ENCODE measurements at regions of chr12 and their contacts with region 1.

Region 1: DNA sequence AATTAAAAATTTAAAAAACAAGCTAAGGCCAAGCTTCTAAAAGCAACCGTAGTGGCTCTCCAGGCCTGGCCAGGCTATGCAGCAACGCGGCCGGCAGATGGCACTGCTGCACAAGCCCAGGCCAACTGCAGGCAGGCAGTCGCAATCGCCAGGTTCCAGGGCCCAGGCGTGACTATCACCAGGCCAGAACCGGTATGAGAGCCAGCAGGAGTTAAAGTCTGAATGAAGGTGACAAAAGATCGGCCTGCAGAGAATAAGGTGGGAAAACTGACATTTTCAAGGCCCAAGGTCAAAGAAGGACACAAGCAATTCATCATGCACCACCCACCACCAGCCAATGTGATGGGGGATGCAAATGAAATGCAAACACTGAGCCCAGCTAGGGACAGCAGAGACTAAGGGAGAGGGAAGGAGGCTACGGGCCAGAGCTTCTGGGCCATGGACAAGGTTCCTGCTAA is 43.6 kb upstream of the ANO2 start:
- DNase-seq: peak; percentile 49 to 81 (median 68)
- ATAC-seq: peak; percentile 75
- H3K4me3 ChIP-seq: no peak overlapping the region
- H3K4me3 Mint-ChIP-seq: no peak overlapping the region
- H3K27ac ChIP-seq: no peak overlapping the region
- H3K27ac Mint-ChIP-seq: no peak overlapping the region
- H3K4me1 ChIP-seq: no peaks in the 10 kb centered on the region
- H3K4me1 Mint-ChIP-seq: peaks cover 2% of the 10 kb centered on the region
- H3K27me3 ChIP-seq: no peaks in the 10 kb centered on the region
- H3K27me3 Mint-ChIP-seq: no peaks in the 10 kb centered on the region
- CTCF ChIP-seq: peak; percentile 91

Region 2: GRCh38 chr12:5808981-5809380 is 179.7 kb before region 1 on chr12:
- CTCF ChIA-PET with region 1: no interaction called
- POLR2A ChIA-PET with region 1: no interaction called
- intact Hi-C with region 1: no loop called
- DNase-seq: no peak
- ATAC-seq: no peak
- H3K4me3 ChIP-seq: no peak overlapping the region
- H3K4me3 Mint-ChIP-seq: no peak overlapping the region
- H3K27ac ChIP-seq: no peak overlapping the region
- H3K27ac Mint-ChIP-seq: no peak overlapping the region
- H3K4me1 ChIP-seq: no peaks in the 10 kb centered on the region
- H3K4me1 Mint-ChIP-seq: no peaks in the 10 kb centered on the region
- H3K27me3 ChIP-seq: no peaks in the 10 kb centered on the region
- H3K27me3 Mint-ChIP-seq: peaks cover 14% of the 10 kb centered on the region
- CTCF ChIP-seq: no peak

Region 3: GRCh38 chr12:5973461-5974130 is 15.1 kb before region 1 on chr12:
- CTCF ChIA-PET with region 1: interaction called, 14 read pairs
- POLR2A ChIA-PET with region 1: no interaction called
- intact Hi-C with region 1: no loop called
- DNase-seq: no peak
- ATAC-seq: no peak
- H3K4me3 ChIP-seq: no peak overlapping the region
- H3K4me3 Mint-ChIP-seq: no peak overlapping the region
- H3K27ac ChIP-seq: no peak overlapping the region
- H3K27ac Mint-ChIP-seq: no peak overlapping the region
- H3K4me1 ChIP-seq: no peaks in the 10 kb centered on the region
- H3K4me1 Mint-ChIP-seq: no peaks in the 10 kb centered on the region
- H3K27me3 ChIP-seq: no peaks in the 10 kb centered on the region
- H3K27me3 Mint-ChIP-seq: peaks cover 39% of the 10 kb centered on the region
- CTCF ChIP-seq: no peak

Region 4: DNA sequence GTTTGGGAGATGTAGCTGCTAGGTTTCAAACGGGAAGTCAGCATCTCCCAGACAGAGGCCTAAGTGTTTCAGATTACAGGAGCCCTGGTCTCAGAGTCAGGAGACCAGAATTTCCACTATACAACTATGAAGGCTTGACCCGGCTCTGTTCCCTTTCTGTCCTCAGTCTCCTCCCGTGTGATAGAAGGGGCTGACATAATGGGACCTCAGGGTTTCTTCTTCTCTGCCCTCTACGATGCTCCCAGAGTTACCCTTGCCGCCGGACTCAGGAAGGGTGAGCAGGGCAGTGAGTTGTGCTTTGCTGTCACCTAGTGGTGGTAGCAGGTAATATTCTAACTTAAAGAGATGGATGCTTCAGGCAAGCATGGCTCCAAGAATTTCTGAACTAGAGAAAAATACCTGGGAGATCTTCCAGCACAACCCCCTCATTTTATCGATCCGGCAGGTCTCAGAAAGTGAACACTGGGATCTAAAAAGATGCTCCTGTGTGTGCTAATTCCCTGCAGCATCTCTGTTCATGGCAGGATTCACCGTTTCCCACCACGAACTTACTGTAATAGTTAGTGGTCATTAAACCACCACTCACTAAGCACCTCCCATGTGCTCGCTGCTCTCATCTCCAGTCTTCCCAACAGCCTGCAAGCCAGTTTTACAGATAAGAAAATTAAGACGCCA is 51.3 kb after region 1 on chr12:
- CTCF ChIA-PET with region 1: interaction called, 168 read pairs
- POLR2A ChIA-PET with region 1: no interaction called
- intact Hi-C with region 1: loop called (anchors 1 kb)
- DNase-seq: peak in 8 of 9 experiments; percentile 21 to 74 (median 44)
- ATAC-seq: peak; percentile 72
- H3K4me3 ChIP-seq: no peak overlapping the region
- H3K4me3 Mint-ChIP-seq: no peak overlapping the region
- H3K27ac ChIP-seq: no peak overlapping the region
- H3K27ac Mint-ChIP-seq: no peak overlapping the region
- H3K4me1 ChIP-seq: peaks cover 4% of the 10 kb centered on the region
- H3K4me1 Mint-ChIP-seq: peaks cover 2% of the 10 kb centered on the region
- H3K27me3 ChIP-seq: no peaks in the 10 kb centered on the region
- H3K27me3 Mint-ChIP-seq: no peaks in the 10 kb centered on the region
- CTCF ChIP-seq: peak; percentile 82

Region 5: DNA sequence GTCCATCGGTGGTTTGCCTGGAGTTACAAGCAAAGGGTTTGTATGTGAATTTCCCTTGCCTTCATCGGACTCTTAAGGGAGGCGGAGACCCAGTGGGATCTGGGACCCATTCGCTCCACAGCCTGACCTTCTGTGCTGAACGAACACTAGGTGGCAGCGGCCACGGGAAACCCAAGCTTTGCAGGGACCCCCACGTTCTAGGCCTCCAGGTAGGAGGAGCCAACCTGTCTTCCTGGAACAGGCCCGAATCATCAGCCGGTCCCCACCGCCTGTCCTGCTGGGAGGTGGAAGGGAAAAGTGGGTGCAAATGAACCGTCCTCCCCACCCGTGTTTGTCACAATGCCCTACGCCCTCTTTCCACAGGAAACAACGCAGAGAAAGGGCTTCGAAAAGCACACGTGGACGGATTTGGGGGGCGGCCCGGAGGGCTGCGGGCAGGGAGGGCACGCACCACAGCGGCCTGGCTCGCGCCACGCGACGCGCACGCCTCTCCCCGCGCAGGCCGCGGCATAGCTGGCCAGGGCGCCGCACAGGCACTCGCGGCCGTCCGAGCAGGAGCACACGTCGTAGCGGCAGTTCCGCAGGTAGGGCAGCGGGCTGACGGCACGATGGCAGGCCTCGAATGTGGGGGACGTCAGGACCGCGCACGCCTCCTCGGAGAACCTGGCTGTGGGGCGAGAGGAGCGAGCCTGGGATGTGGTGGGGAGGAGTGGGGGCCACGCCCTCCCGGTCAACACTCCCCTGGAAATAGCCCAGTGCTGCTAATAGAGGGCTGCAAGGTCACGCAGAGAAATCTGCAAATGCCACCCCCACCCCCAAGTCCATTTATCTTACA is 67.9 kb after region 1 on chr12:
- CTCF ChIA-PET with region 1: interaction called, 24 read pairs
- POLR2A ChIA-PET with region 1: no interaction called
- intact Hi-C with region 1: no loop called
- DNase-seq: peak in 8 of 9 experiments; percentile 20 to 78 (median 58)
- ATAC-seq: peak; percentile 94
- H3K4me3 ChIP-seq: peak overlapping the region; percentile 35 to 54
- H3K4me3 Mint-ChIP-seq: peak overlapping the region; percentile 79
- H3K27ac ChIP-seq: peak overlapping the region in 1 of 2 experiments; percentile 31
- H3K27ac Mint-ChIP-seq: peak overlapping the region; percentile 91
- H3K4me1 ChIP-seq: peaks cover 8% of the 10 kb centered on the region
- H3K4me1 Mint-ChIP-seq: peaks cover 12% of the 10 kb centered on the region
- H3K27me3 ChIP-seq: no peaks in the 10 kb centered on the region
- H3K27me3 Mint-ChIP-seq: no peaks in the 10 kb centered on the region
- CTCF ChIP-seq: peak; percentile 33

Region 6: DNA sequence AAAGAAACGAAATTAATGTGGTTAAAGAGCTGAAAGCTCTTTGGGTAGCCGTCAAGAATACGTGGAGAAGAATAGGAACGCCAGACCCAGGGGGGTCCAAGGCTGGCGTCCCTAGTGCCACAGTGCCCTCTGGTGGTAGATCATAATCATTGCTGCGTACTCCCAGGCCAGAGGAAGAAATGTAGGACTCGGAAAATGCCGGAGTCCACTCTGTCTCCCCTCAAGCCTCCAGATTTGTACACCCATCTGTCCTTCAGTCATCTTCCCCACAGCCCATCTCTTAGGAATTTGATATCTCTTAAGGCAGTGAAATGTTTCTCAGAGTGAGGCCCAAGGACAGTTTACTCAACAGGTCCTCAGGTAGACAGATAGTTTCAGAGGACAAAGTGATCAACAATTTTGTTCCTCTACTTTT is 296.4 kb after region 1 on chr12:
- CTCF ChIA-PET with region 1: interaction called, 78 read pairs
- POLR2A ChIA-PET with region 1: no interaction called
- intact Hi-C with region 1: loop called (anchors 1 kb)
- DNase-seq: peak in 8 of 9 experiments; percentile 43 to 80 (median 66)
- ATAC-seq: peak; percentile 91
- H3K4me3 ChIP-seq: no peak overlapping the region
- H3K4me3 Mint-ChIP-seq: no peak overlapping the region
- H3K27ac ChIP-seq: no peak overlapping the region
- H3K27ac Mint-ChIP-seq: no peak overlapping the region
- H3K4me1 ChIP-seq: no peaks in the 10 kb centered on the region
- H3K4me1 Mint-ChIP-seq: peaks cover 4% of the 10 kb centered on the region
- H3K27me3 ChIP-seq: peaks cover 0 to 4% of the 10 kb centered on the region in 2 experiments
- H3K27me3 Mint-ChIP-seq: peaks cover 17% of the 10 kb centered on the region
- CTCF ChIP-seq: peak; percentile 83

Region 7: GRCh38 chr12:6407236-6407954 is 418.7 kb after region 1 on chr12:
- CTCF ChIA-PET with region 1: no interaction called
- POLR2A ChIA-PET with region 1: no interaction called
- intact Hi-C with region 1: no loop called
- DNase-seq: no peak
- ATAC-seq: no peak
- H3K4me3 ChIP-seq: no peak overlapping the region
- H3K4me3 Mint-ChIP-seq: no peak overlapping the region
- H3K27ac ChIP-seq: no peak overlapping the region
- H3K27ac Mint-ChIP-seq: no peak overlapping the region
- H3K4me1 ChIP-seq: no peaks in the 10 kb centered on the region
- H3K4me1 Mint-ChIP-seq: no peaks in the 10 kb centered on the region
- H3K27me3 ChIP-seq: no peaks in the 10 kb centered on the region
- H3K27me3 Mint-ChIP-seq: peaks cover 2% of the 10 kb centered on the region
- CTCF ChIP-seq: no peak

Measured in CD8-positive, alpha-beta T cell (primary cell).